ENCODE measurements at regions of chr9 and their contacts with region 1.

Region 1: GRCh38 chr9:87381050-87381711 is 116.5 kb upstream of the DAPK1 start:
- DNase-seq: no peak
- H3K4me3 ChIP-seq: no peak overlapping the region
- H3K27ac ChIP-seq: no peak overlapping the region
- H3K4me1 ChIP-seq: no peaks in the 10 kb centered on the region
- H3K27me3 ChIP-seq: peaks cover 0 to 5% of the 10 kb centered on the region in 2 experiments
- CTCF ChIP-seq: no peak
- POLR2A ChIP-seq: no peak

Region 2: GRCh38 chr9:87395804-87396479 is 14.8 kb after region 1 on chr9:
- CTCF ChIA-PET with region 1: interaction called, 3 read pairs
- POLR2A ChIA-PET with region 1: no interaction called
- dilution Hi-C with region 1: no loop called
- intact Hi-C with region 1: loop called (anchors 1 kb)
- DNase-seq: peak; percentile 6
- H3K4me3 ChIP-seq: no peak overlapping the region
- H3K27ac ChIP-seq: no peak overlapping the region
- H3K4me1 ChIP-seq: no peaks in the 10 kb centered on the region
- H3K27me3 ChIP-seq: peaks cover 2 to 4% of the 10 kb centered on the region in 2 experiments
- CTCF ChIP-seq: no peak
- POLR2A ChIP-seq: no peak